B cell (primary cell): ENCODE measurements at regions of chr11 and their contacts with region 1.

Region 1: DNA sequence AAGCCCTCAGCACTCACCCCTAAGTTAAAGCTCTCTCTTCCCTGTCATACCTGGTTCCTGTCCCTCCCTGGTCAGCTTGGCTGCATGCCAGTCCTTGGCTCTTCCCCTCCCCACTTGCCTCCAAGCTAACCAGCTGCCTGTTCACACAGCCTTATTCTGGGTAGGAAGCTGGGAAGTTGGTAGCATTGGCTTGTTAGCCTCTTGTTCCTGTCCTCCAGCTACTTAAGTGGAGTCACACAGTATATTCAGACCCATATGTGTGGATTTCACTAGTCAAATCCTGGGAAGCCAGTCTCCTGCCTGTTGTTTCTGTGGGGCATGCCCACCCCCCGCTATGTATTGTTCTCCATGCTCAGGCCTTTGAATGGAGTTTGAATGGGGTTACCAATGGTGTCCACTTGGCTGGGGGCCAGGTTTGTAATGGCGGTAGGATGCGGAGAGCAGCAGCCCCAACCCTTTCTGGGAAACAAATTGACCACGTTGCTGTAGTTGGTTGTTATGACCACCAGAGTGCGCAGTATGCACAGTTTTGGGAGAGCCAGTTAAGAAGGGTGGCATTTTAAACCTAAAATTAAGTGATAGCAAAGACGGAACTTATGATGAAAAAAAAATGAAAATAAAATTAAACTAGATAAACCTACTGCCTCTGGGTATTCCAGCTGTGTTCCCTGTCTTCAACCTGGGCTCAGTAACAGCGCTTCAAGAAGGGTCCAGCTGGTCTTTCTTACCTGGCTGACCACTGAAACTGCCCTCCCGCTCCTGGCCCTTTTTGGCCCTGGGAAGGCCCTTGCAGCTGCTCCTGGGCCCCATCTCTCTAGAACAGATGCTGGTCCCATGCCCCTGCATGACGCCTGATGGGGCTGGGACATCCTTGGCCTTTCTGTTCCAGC is 10.7 kb upstream of the RPS3 start:
- DNase-seq: peak; percentile 82
- ATAC-seq: peak; percentile 90
- H3K4me3 ChIP-seq: no peak overlapping the region
- H3K4me3 Mint-ChIP-seq: no peak overlapping the region
- H3K27ac ChIP-seq: no peak overlapping the region
- H3K27ac Mint-ChIP-seq: no peak overlapping the region
- H3K4me1 ChIP-seq: peaks cover 4 to 6% of the 10 kb centered on the region in 2 donors
- H3K4me1 Mint-ChIP-seq: peaks cover 2% of the 10 kb centered on the region
- H3K27me3 ChIP-seq: peaks cover 0 to 10% (median 3%) of the 10 kb centered on the region in 4 experiments
- H3K27me3 Mint-ChIP-seq: peaks cover 17% of the 10 kb centered on the region
- CTCF ChIP-seq: peak; percentile 83

Region 2: GRCh38 chr11:75280227-75280701 is 108.4 kb before region 1 on chr11:
- CTCF ChIA-PET with region 1: interaction called, 347 read pairs
- POLR2A ChIA-PET with region 1: no interaction called
- intact Hi-C with region 1: loop called (anchors 1 kb)
- DNase-seq: peak; percentile 81
- ATAC-seq: peak; percentile 68
- H3K4me3 ChIP-seq: no peak overlapping the region
- H3K4me3 Mint-ChIP-seq: no peak overlapping the region
- H3K27ac ChIP-seq: no peak overlapping the region
- H3K27ac Mint-ChIP-seq: no peak overlapping the region
- H3K4me1 ChIP-seq: peaks cover 14 to 16% of the 10 kb centered on the region in 2 donors
- H3K4me1 Mint-ChIP-seq: peaks cover 16% of the 10 kb centered on the region
- H3K27me3 ChIP-seq: no peaks in the 10 kb centered on the region
- H3K27me3 Mint-ChIP-seq: peaks cover 6% of the 10 kb centered on the region
- CTCF ChIP-seq: peak; percentile 100

Region 3: DNA sequence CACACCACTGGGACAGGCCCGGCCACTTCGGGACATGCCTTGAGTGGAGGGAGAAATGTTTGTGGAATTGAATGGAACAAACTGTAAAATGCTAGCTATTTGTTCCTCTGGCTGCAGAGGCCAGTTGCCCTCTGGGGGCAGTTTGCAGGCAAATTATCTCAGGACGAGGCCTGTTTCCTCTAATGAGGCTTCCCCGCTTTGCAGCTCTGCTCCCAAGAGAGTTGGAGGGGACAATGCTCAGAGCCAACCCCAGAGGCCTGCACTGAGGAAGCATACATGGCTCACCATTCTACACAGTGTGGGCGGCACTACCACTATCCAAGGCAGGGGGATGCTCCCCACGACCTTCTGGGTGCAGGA is 48.6 kb before region 1 on chr11:
- CTCF ChIA-PET with region 1: interaction called, 16 read pairs
- POLR2A ChIA-PET with region 1: interaction called, 5 read pairs
- intact Hi-C with region 1: no loop called
- DNase-seq: peak; percentile 23
- ATAC-seq: peak; percentile 48
- H3K4me3 ChIP-seq: no peak overlapping the region
- H3K4me3 Mint-ChIP-seq: peak overlapping the region; percentile 19
- H3K27ac ChIP-seq: no peak overlapping the region
- H3K27ac Mint-ChIP-seq: peak overlapping the region; percentile 85
- H3K4me1 ChIP-seq: peaks cover 26 to 31% of the 10 kb centered on the region in 2 donors
- H3K4me1 Mint-ChIP-seq: peaks cover 40% of the 10 kb centered on the region
- H3K27me3 ChIP-seq: no peaks in the 10 kb centered on the region
- H3K27me3 Mint-ChIP-seq: no peaks in the 10 kb centered on the region
- CTCF ChIP-seq: no peak

Region 4: GRCh38 chr11:75406338-75406777 is 17.7 kb after region 1 on chr11:
- CTCF ChIA-PET with region 1: interaction called, 10 read pairs
- POLR2A ChIA-PET with region 1: no interaction called
- intact Hi-C with region 1: no loop called
- DNase-seq: no peak
- ATAC-seq: no peak
- H3K4me3 ChIP-seq: no peak overlapping the region
- H3K4me3 Mint-ChIP-seq: no peak overlapping the region
- H3K27ac ChIP-seq: peak overlapping the region in 1 of 2 donors; percentile 55
- H3K27ac Mint-ChIP-seq: no peak overlapping the region
- H3K4me1 ChIP-seq: peaks cover 10 to 11% of the 10 kb centered on the region in 2 donors
- H3K4me1 Mint-ChIP-seq: peaks cover 30% of the 10 kb centered on the region
- H3K27me3 ChIP-seq: no peaks in the 10 kb centered on the region
- H3K27me3 Mint-ChIP-seq: no peaks in the 10 kb centered on the region
- CTCF ChIP-seq: no peak

Region 5: DNA sequence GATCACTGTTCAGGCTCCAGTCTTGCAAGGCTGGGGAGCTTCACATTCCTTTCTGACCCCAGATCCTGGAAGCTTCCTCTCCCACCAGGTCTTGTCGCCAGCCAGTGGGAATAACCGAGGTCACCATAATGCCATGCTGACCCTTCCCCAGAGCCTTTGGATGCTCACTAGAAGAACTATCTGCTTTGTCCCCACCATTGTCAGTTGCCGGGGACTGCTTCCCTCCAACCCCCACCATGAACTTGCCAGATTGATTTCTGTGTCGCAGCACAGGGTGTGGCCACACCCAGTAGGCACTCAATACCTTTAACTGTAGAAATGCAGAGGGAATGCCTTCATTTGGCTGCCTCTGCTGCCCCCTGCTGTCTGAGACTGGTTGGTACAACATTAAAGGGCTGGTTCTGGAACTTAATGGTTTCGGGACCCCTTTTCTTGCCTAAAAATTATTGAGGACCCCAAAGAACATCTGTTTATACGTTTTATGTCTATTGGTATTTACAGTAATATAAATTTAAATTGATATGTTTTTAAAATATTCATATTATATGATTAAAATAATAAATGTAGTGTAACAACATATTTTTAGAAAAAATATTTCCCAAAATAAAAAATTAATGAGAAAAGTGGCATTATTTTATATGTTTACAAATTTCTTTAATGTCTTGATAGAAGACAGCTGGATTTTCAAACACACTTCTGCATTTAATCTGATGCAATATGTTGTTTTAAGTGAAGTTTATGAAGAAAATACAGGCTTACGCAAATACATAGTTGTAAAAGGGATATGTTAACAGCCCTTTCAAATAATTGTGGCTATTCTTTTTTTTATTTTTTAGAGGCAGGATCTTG is 143.8 kb after region 1 on chr11:
- CTCF ChIA-PET with region 1: interaction called, 108 read pairs
- POLR2A ChIA-PET with region 1: no interaction called
- intact Hi-C with region 1: loop called (anchors 1 kb)
- DNase-seq: peak; percentile 84
- ATAC-seq: peak; percentile 72
- H3K4me3 ChIP-seq: no peak overlapping the region
- H3K4me3 Mint-ChIP-seq: no peak overlapping the region
- H3K27ac ChIP-seq: no peak overlapping the region
- H3K27ac Mint-ChIP-seq: peak overlapping the region; percentile 0
- H3K4me1 ChIP-seq: peaks cover 12 to 24% of the 10 kb centered on the region in 2 donors
- H3K4me1 Mint-ChIP-seq: peaks cover 36% of the 10 kb centered on the region
- H3K27me3 ChIP-seq: peaks cover 0 to 5% (median 3%) of the 10 kb centered on the region in 4 experiments
- H3K27me3 Mint-ChIP-seq: peaks cover 15% of the 10 kb centered on the region
- CTCF ChIP-seq: peak; percentile 92